AG04450 (cell line): ENCODE measurements at regions of chr2 and their contacts with region 1.

Region 1: DNA sequence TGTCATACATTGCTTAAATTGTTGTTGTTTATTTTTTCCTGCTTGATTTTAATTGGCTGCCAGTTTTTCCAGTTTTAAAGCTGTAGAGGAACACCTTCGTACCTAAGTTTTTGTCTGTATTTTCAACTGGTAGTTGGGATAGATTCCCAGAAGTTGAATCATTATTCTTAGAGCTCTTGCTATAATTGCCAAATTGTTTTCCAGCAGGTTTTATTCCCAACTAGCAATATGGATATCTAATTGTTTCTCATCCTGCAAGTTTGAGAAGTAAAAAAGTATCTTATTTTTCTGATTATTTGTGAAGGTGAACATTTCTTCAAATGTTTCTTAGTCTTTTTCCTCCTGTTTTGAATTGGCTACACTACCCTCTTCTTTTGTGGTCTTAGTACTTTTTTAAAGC is 6.7 kb downstream of the SMARCAL1 start:
- DNase-seq: no peak
- H3K4me3 ChIP-seq: no peak overlapping the region
- H3K27ac ChIP-seq: no peak overlapping the region
- H3K27me3 ChIP-seq: no peaks in the 10 kb centered on the region
- CTCF ChIP-seq: no peak

Region 2: DNA sequence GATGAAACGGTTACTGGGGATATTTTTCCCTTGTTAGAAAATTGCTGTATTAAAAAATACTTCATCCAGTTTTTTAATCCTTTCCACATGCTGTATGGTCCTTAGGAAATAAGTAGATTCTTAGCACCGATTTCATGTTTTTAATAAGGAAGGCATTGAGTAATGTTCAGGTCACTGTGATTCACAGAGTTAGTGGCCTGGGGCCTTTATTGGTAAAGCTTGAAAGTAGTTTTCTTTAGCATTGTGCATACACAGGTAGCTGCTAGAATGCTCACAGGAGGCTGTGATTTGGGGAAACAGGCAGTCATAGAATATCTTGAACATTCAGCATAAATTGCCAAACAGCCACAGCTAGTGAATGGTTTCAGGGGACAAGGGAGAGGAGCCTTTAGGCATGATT is 230.0 kb before region 1 on chr2:
- CTCF ChIA-PET with region 1: no interaction called
- POLR2A ChIA-PET with region 1: interaction called, 12 read pairs
- DNase-seq: no peak
- H3K4me3 ChIP-seq: no peak overlapping the region
- H3K27ac ChIP-seq: no peak overlapping the region
- H3K27me3 ChIP-seq: no peaks in the 10 kb centered on the region
- CTCF ChIP-seq: no peak